Activated naive CD8-positive, alpha-beta T cell treated with anti-CD3 and anti-CD28 coated beads, Interleukin-2, amount 10 ng/mL, durations not matched to agents 7 days and 5 days (primary cell): ENCODE measurements at regions of chr6 and their contacts with region 1.

Region 1: GRCh38 chr6:27825025-27825793 is 87.0 kb downstream of the OR2B2 start:
- DNase-seq: no peak
- ATAC-seq: peak; percentile 2
- H3K4me3 Mint-ChIP-seq: peak overlapping the region; percentile 90
- H3K27ac Mint-ChIP-seq: peak overlapping the region; percentile 99
- H3K4me1 Mint-ChIP-seq: peaks cover 39% of the 10 kb centered on the region
- H3K27me3 Mint-ChIP-seq: no peaks in the 10 kb centered on the region

Region 2: DNA sequence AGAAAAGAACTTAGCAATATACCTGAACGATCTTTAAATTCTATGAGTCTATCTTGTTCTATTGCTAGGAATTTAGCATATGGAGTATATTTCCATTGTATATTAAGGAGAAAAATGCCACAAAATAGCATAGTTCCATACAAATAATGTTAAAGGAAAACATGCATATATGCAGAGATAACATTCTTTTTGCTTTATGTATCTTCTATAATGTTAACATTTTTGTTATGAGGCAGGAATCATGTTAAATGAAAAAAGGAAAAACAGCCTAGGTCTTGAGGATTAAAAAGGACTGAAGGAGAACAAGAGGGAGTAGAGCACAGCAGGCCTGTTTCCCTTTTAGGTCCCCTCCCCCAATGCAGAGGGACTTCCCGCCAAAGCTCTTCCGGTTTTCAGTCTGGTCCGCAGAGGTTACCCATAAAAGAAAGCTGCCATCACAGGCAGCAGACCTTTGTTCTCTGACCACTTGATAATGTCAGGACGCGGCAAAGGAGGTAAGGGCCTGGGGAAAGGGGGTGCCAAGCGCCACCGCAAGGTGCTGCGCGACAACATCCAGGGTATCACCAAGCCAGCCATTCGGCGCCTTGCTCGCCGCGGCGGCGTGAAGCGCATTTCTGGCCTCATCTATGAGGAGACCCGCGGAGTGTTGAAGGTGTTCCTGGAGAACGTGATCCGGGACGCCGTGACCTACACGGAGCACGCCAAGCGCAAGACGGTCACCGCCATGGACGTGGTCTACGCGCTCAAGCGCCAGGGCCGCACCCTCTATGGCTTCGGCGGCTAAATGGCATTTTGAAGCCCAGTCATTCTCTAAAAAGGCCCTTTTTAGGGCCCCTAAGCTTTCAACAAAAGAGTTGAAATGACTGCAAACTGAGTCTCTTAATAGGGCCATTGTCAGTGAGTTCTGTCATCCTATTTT is 686.1 kb before region 1 on chr6:
- POLR2A ChIA-PET with region 1: interaction called, 44 read pairs
- DNase-seq: peak; percentile 81
- ATAC-seq: peak; percentile 73
- H3K4me3 Mint-ChIP-seq: peak overlapping the region; percentile 95
- H3K27ac Mint-ChIP-seq: peak overlapping the region; percentile 98
- H3K4me1 Mint-ChIP-seq: peaks cover 39% of the 10 kb centered on the region
- H3K27me3 Mint-ChIP-seq: no peaks in the 10 kb centered on the region